Body of pancreas (tissue), 4 donors: ENCODE measurements at regions of chrX and their contacts with region 1.

Region 1: GRCh38 chrX:18406531-18407266 is 18.7 kb upstream of the CDKL5 start:
- DNase-seq: no peak
- ATAC-seq: no peak
- H3K4me3 ChIP-seq: no peak overlapping the region
- H3K27ac ChIP-seq: no peak overlapping the region
- H3K4me1 ChIP-seq: no peaks in the 10 kb centered on the region
- H3K27me3 ChIP-seq: no peaks in the 10 kb centered on the region
- CTCF ChIP-seq: no peak
- POLR2A ChIP-seq: no peak

Region 2: GRCh38 chrX:18468599-18468998 is 61.9 kb after region 1 on chrX:
- intact Hi-C with region 1: no loop called
- DNase-seq: no peak
- ATAC-seq: no peak
- H3K4me3 ChIP-seq: no peak overlapping the region
- H3K27ac ChIP-seq: no peak overlapping the region
- H3K4me1 ChIP-seq: no peaks in the 10 kb centered on the region
- H3K27me3 ChIP-seq: no peaks in the 10 kb centered on the region
- CTCF ChIP-seq: no peak
- POLR2A ChIP-seq: no peak

Region 3: GRCh38 chrX:18899796-18900447 is 493.2 kb after region 1 on chrX:
- intact Hi-C with region 1: loop called (anchors 10 kb)
- DNase-seq: no peak
- ATAC-seq: no peak
- H3K4me3 ChIP-seq: no peak overlapping the region
- H3K27ac ChIP-seq: no peak overlapping the region
- H3K4me1 ChIP-seq: no peaks in the 10 kb centered on the region
- H3K27me3 ChIP-seq: no peaks in the 10 kb centered on the region
- CTCF ChIP-seq: peak in 4 of 7 experiments; percentile 12 to 21 (median 18)
- POLR2A ChIP-seq: no peak